ENCODE measurements at regions of chr16 and their contacts with region 1.

Region 1: GRCh38 chr16:56600398-56600999 is 7.9 kb upstream of the MT2A start:
- DNase-seq: peak; percentile 54
- H3K4me3 ChIP-seq: no peak overlapping the region
- H3K27ac ChIP-seq: no peak overlapping the region
- H3K4me1 ChIP-seq: peaks cover 6% of the 10 kb centered on the region
- H3K27me3 ChIP-seq: peaks cover 2 to 3% of the 10 kb centered on the region in 2 experiments
- CTCF ChIP-seq: peak; percentile 65 to 74
- POLR2A ChIP-seq: no peak

Region 2: GRCh38 chr16:56300891-56301850 is 299.3 kb before region 1 on chr16:
- CTCF ChIA-PET with region 1: no interaction called
- POLR2A ChIA-PET with region 1: no interaction called
- dilution Hi-C with region 1: no loop called
- intact Hi-C with region 1: no loop called
- DNase-seq: no peak
- H3K4me3 ChIP-seq: no peak overlapping the region
- H3K27ac ChIP-seq: no peak overlapping the region
- H3K4me1 ChIP-seq: no peaks in the 10 kb centered on the region
- H3K27me3 ChIP-seq: no peaks in the 10 kb centered on the region
- CTCF ChIP-seq: no peak
- POLR2A ChIP-seq: no peak

Region 3: GRCh38 chr16:56491657-56492261 is 108.7 kb before region 1 on chr16:
- CTCF ChIA-PET with region 1: no interaction called
- POLR2A ChIA-PET with region 1: interaction called, 11 read pairs
- dilution Hi-C with region 1: no loop called
- intact Hi-C with region 1: no loop called
- DNase-seq: no peak
- H3K4me3 ChIP-seq: no peak overlapping the region
- H3K27ac ChIP-seq: no peak overlapping the region
- H3K4me1 ChIP-seq: no peaks in the 10 kb centered on the region
- H3K27me3 ChIP-seq: no peaks in the 10 kb centered on the region
- CTCF ChIP-seq: no peak
- POLR2A ChIP-seq: no peak

Region 4: DNA sequence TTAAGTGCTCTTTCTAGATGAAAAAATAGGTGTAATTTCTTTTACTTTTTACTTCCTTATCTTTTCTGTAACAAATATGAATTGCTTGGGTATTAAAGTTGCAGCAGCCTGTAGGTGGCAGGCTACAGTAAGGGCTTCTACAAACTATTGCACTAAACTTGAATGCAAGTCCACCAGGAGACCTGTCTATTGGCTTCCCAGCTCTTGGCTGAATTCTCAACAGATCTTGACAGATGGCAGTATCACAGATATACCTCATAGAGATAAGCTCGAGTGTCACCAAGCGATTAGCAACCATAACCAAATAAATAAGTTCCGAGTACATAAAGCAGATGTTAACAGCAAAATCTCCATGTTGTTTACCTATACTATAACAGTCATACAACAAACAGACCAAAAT is 86.5 kb before region 1 on chr16:
- CTCF ChIA-PET with region 1: interaction called, 113 read pairs
- POLR2A ChIA-PET with region 1: no interaction called
- dilution Hi-C with region 1: no loop called
- intact Hi-C with region 1: loop called (anchors 1 kb)
- DNase-seq: peak; percentile 79
- H3K4me3 ChIP-seq: no peak overlapping the region
- H3K27ac ChIP-seq: no peak overlapping the region
- H3K4me1 ChIP-seq: peaks cover 9% of the 10 kb centered on the region
- H3K27me3 ChIP-seq: no peaks in the 10 kb centered on the region
- CTCF ChIP-seq: peak; percentile 56 to 57
- POLR2A ChIP-seq: no peak

Region 5: GRCh38 chr16:56547120-56547948 is 53.2 kb before region 1 on chr16:
- CTCF ChIA-PET with region 1: interaction called, 11 read pairs
- POLR2A ChIA-PET with region 1: no interaction called
- dilution Hi-C with region 1: no loop called
- intact Hi-C with region 1: no loop called
- DNase-seq: no peak
- H3K4me3 ChIP-seq: no peak overlapping the region
- H3K27ac ChIP-seq: no peak overlapping the region
- H3K4me1 ChIP-seq: peaks cover 4% of the 10 kb centered on the region
- H3K27me3 ChIP-seq: peaks cover 7% of the 10 kb centered on the region in 2 experiments
- CTCF ChIP-seq: no peak
- POLR2A ChIP-seq: no peak

Region 6: GRCh38 chr16:56583351-56584168 is 16.9 kb before region 1 on chr16:
- CTCF ChIA-PET with region 1: interaction called, 14 read pairs
- POLR2A ChIA-PET with region 1: no interaction called
- dilution Hi-C with region 1: no loop called
- intact Hi-C with region 1: no loop called
- DNase-seq: no peak
- H3K4me3 ChIP-seq: no peak overlapping the region
- H3K27ac ChIP-seq: no peak overlapping the region
- H3K4me1 ChIP-seq: no peaks in the 10 kb centered on the region
- H3K27me3 ChIP-seq: peaks cover 5 to 17% of the 10 kb centered on the region in 2 experiments
- CTCF ChIP-seq: no peak
- POLR2A ChIP-seq: no peak

Region 7: DNA sequence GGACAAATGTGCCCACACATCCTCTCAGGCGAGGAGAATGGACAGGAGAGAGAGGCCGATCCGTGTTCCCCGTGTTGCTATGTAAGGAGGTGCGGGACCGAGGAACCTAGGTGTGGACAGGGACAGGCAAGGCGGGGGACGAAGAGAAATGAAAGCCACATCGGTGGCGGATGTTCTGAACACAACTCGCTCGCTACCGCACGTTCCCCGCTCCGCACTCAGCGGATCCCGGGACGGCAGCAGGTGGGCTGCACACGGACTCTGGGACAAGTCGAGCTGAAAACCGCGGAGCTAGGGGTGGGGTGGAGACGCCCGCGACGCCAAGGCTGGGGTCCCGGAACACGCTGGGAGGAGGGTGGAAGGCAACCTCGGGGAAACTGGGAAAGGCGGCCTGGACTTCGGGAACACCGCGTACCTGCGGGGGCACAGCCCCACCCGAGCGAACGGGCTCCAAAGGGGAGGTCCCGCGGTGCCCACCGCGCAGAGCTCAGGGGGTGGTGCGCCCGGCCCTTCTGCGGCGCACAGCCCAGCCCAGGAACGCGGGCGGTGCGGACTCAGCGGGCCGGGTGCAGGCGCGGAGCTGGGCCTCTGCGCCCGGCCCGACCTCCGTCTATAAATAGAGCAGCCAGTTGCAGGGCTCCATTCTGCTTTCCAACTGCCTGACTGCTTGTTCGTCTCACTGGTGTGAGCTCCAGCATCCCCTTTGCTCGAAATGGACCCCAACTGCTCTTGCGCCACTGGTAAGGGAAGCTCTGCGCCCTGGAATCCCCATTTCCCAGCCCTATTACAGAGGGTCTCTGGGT is 24.8 kb after region 1 on chr16 and contains the start of gene MT1E:
- CTCF ChIA-PET with region 1: interaction called, 14 read pairs
- POLR2A ChIA-PET with region 1: interaction called, 20 read pairs
- dilution Hi-C with region 1: no loop called
- intact Hi-C with region 1: no loop called
- DNase-seq: peak; percentile 54
- H3K4me3 ChIP-seq: peak within 1 kb of the TSS; percentile 21 to 74 (median 64)
- H3K27ac ChIP-seq: peak within 1 kb of the TSS; percentile 61
- H3K4me1 ChIP-seq: peaks cover 12% of the 10 kb centered on the region
- H3K27me3 ChIP-seq: no peaks in the 10 kb centered on the region
- CTCF ChIP-seq: no peak
- POLR2A ChIP-seq: peak; percentile 99
- total RNA-seq, gene MT1E: 201 and 346 TPM in 2 replicates

Measured in endothelial cell of umbilical vein (primary cell).